ENCODE measurements at regions of chr1 and their contacts with region 1.

Region 1: GRCh38 chr1:168520052-168520751 is 23.6 kb downstream of the XCL2 start:
- DNase-seq: peak in 4 of 9 donors; percentile 7 to 17 (median 11)
- ATAC-seq: peak; percentile 87
- H3K4me3 ChIP-seq: peak overlapping the region; percentile 21
- H3K4me3 Mint-ChIP-seq: peak overlapping the region; percentile 54 to 93 (median 68)
- H3K27ac ChIP-seq: peak overlapping the region; percentile 64
- H3K27ac Mint-ChIP-seq: peak overlapping the region; percentile 83 to 94 (median 89)
- H3K4me1 ChIP-seq: peaks cover 42 to 53% of the 10 kb centered on the region in 2 donors
- H3K4me1 Mint-ChIP-seq: peaks cover 45 to 64% (median 57%) of the 10 kb centered on the region in 7 donors
- H3K27me3 ChIP-seq: no peaks in the 10 kb centered on the region
- H3K27me3 Mint-ChIP-seq: peaks cover 0 to 2% (median 0%) of the 10 kb centered on the region in 5 donors

Region 2: GRCh38 chr1:168504064-168504837 is 16.0 kb before region 1 on chr1:
- CTCF ChIA-PET with region 1: interaction called, 3 read pairs
- POLR2A ChIA-PET with region 1: interaction called, 3 read pairs
- intact Hi-C with region 1: loop called in 1 of 2 experiments (anchors 1 kb)
- DNase-seq: no peak
- ATAC-seq: peak; percentile 94
- H3K4me3 ChIP-seq: no peak overlapping the region
- H3K4me3 Mint-ChIP-seq: peak overlapping the region in 1 of 10 donors; percentile 33
- H3K27ac ChIP-seq: no peak overlapping the region
- H3K27ac Mint-ChIP-seq: peak overlapping the region in 5 of 9 donors; percentile 0 to 70 (median 5)
- H3K4me1 ChIP-seq: peaks cover 6 to 9% of the 10 kb centered on the region in 2 donors
- H3K4me1 Mint-ChIP-seq: peaks cover 30 to 71% (median 40%) of the 10 kb centered on the region in 7 donors
- H3K27me3 ChIP-seq: no peaks in the 10 kb centered on the region
- H3K27me3 Mint-ChIP-seq: no peaks in the 10 kb centered on the region

Region 3: GRCh38 chr1:168623003-168623828 is 103.0 kb after region 1 on chr1:
- CTCF ChIA-PET with region 1: no interaction called
- POLR2A ChIA-PET with region 1: no interaction called
- intact Hi-C with region 1: no loop called
- DNase-seq: no peak
- ATAC-seq: no peak
- H3K4me3 ChIP-seq: no peak overlapping the region
- H3K4me3 Mint-ChIP-seq: no peak overlapping the region
- H3K27ac ChIP-seq: no peak overlapping the region
- H3K27ac Mint-ChIP-seq: no peak overlapping the region
- H3K4me1 ChIP-seq: no peaks in the 10 kb centered on the region
- H3K4me1 Mint-ChIP-seq: no peaks in the 10 kb centered on the region
- H3K27me3 ChIP-seq: no peaks in the 10 kb centered on the region
- H3K27me3 Mint-ChIP-seq: peaks cover 0 to 20% (median 4%) of the 10 kb centered on the region in 5 donors